ENCODE measurements at regions of chrX and their contacts with region 1.

Region 1: DNA sequence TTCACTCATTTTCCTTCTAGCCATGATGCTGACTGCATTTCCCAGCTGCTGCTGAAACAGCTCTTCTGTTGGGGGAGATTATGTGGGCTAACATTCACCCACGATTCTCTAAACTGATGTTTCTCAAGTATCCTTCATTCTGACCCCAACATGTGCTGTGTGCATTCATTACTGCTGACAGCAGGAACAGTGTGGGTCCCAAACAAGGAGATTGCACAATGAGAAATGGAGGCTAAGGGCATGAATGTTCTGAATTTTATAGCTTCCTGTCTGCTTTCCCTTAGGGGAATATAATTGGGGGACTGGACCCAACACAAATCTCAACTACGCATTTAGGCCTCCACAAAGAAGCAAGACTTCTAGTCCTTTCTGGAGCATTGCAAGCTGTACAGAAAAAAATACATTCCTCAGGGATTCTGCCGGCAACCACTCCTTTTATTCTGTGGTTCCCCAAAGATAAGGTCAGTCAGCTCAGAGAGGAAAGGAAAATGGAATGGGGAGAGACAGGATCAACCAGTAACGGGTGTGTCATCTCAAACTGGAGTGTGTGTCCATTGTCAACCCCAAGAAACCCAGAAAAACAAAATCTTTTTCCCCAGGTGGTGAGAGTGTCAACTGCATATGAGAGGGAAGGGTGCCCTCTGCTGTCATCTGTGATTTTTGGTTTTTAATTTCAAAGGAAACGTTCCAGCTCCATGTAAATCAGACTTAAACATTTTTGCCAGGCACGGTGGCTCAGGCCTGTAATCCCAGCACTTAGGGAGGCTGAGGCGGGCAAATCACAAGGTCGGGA is 81.5 kb upstream of the EGFL6 start:
- DNase-seq: peak; percentile 72
- ATAC-seq: peak; percentile 86
- H3K4me3 ChIP-seq: no peak overlapping the region
- H3K27ac ChIP-seq: peak overlapping the region; percentile 95
- H3K4me1 ChIP-seq: peaks cover 16% of the 10 kb centered on the region
- H3K27me3 ChIP-seq: no peaks in the 10 kb centered on the region
- CTCF ChIP-seq: peak; percentile 56 to 80 (median 62)
- EP300 ChIP-seq: no peak
- POLR2A ChIP-seq: no peak
- RAD21 ChIP-seq: peak; percentile 98

Region 2: DNA sequence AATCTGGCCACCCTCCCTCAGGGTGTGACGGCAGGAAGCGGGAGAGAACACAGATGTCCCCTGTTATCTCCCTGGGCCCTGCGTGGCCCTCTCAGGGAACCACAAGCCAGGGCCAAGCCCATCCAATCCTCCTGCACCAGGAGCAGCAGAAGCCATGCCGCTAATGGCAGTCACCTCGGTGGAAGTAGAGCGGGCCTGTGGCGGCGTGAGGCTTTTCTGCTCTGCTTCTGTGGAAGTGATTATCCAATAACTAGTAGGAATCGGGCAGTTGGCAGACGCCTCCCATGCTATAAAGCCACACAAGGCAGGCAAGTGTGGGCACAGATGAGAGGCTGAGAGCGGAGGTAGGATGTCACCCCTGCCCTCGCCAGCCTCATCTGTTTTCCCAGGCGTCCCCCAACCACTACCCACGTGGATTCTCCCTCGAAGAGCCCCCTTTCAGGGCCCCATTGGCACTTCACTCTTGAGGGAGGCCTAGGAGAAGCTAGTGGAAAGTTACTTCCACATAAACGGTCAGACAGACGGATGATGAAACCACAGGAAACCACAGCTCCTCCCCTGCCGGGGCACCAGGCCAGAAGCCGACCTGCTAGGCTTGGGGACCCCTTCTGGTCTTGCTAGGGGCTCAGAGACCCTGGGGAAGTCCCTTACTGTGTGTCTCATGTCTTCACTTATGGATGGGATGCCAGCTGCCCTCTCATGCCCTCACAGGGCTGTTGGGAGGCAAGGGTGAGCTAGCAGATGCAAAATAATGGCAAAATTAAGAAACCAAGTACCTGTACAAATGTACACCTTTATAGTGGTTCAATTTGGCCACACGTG is 531.8 kb before region 1 on chrX:
- CTCF ChIA-PET with region 1: interaction called, 240 read pairs
- POLR2A ChIA-PET with region 1: interaction called, 7 read pairs
- RAD21 ChIA-PET with region 1: interaction called, 183 read pairs
- SMC1A ChIA-PET with region 1: interaction called, 200 read pairs
- in situ Hi-C with region 1: no loop called
- intact Hi-C with region 1: no loop called
- DNase-seq: peak; percentile 77
- ATAC-seq: peak; percentile 59
- H3K4me3 ChIP-seq: peak overlapping the region; percentile 32
- H3K27ac ChIP-seq: peak overlapping the region; percentile 99
- H3K4me1 ChIP-seq: peaks cover 42% of the 10 kb centered on the region
- H3K27me3 ChIP-seq: no peaks in the 10 kb centered on the region
- CTCF ChIP-seq: no peak
- EP300 ChIP-seq: peak; percentile 48 to 62; a peak in 2 of 4 replicates
- POLR2A ChIP-seq: peak; percentile 30
- RAD21 ChIP-seq: no peak

Region 3: DNA sequence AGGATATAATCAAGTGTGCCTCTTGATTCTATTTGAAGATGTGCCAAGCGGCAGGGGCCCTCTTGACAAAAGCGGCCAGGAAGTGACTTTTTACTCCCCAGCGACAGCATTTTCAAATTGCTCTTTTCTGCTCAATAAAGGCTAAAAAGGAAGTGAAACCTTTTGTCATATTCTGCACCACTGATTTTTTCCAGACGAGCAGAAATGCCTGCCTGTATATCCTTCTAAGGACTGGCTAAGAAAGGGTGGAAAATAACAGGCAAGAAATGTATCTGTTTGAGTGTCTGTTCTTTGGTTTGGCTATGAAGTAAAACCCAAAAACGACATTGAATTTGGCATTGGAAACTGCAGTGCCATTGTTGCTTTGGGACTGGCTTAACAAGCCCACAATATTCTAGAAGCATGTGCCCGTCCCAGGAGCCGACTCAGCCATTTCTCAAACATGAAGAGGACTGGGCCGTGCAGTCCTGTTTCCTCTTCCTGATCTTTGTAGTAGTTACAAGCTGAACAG is 487.6 kb before region 1 on chrX:
- CTCF ChIA-PET with region 1: interaction called, 5 read pairs
- POLR2A ChIA-PET with region 1: no interaction called
- RAD21 ChIA-PET with region 1: interaction called, 8 read pairs
- SMC1A ChIA-PET with region 1: interaction called, 8 read pairs
- in situ Hi-C with region 1: no loop called
- intact Hi-C with region 1: loop called (anchors 5 kb)
- DNase-seq: peak; percentile 90
- ATAC-seq: peak; percentile 52
- H3K4me3 ChIP-seq: peak overlapping the region; percentile 9; the same call in 1 of the 2 replicates
- H3K27ac ChIP-seq: peak overlapping the region; percentile 91
- H3K4me1 ChIP-seq: peaks cover 69% of the 10 kb centered on the region
- H3K27me3 ChIP-seq: no peaks in the 10 kb centered on the region
- CTCF ChIP-seq: no peak
- EP300 ChIP-seq: peak; percentile 73; a peak in 2 of 4 replicates
- POLR2A ChIP-seq: no peak
- RAD21 ChIP-seq: peak; percentile 10; the same call in 1 of the 2 replicates

Region 4: DNA sequence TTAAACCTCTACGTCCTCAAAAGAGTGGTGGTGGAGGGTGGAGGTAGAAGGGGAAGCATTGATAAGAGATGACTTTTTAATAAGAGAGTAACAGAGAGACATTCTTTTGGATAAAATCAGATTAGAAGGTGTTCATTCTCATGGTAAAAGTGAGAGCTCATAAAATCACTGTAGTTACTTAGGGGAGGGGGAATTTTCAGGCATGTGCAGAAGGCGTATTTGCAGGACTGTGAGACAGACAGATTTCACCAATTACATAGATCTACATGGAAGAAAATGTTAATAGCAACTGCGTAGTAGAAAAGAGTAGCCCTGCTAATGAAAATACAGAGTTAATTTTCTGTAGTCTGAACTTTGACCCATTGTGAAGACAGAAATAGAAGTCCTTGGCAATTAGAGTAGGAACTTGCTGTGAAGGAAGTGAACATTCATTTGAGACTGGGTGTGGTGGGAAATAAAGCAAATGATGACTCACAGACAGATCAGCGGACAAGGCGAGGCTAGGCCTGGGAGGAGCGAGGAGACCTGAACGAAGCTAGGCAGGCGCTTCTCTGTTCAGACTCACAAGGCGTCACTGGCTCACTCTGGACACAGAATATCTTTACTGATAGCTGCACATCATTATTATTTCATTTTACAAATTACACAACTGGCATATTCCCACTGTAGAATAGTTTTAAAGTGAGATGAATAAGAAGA is 386.3 kb before region 1 on chrX:
- CTCF ChIA-PET with region 1: interaction called, 15 read pairs
- POLR2A ChIA-PET with region 1: no interaction called
- RAD21 ChIA-PET with region 1: interaction called, 145 read pairs
- SMC1A ChIA-PET with region 1: interaction called, 127 read pairs
- in situ Hi-C with region 1: no loop called
- intact Hi-C with region 1: no loop called
- DNase-seq: no peak
- ATAC-seq: peak; percentile 57
- H3K4me3 ChIP-seq: no peak overlapping the region
- H3K27ac ChIP-seq: no peak overlapping the region
- H3K4me1 ChIP-seq: no peaks in the 10 kb centered on the region
- H3K27me3 ChIP-seq: no peaks in the 10 kb centered on the region
- CTCF ChIP-seq: no peak
- EP300 ChIP-seq: no peak
- POLR2A ChIP-seq: no peak
- RAD21 ChIP-seq: no peak

Region 5: GRCh38 chrX:13283950-13284914 is 203.7 kb before region 1 on chrX:
- CTCF ChIA-PET with region 1: interaction called, 8 read pairs
- POLR2A ChIA-PET with region 1: no interaction called
- RAD21 ChIA-PET with region 1: interaction called, 4 read pairs
- SMC1A ChIA-PET with region 1: interaction called, 11 read pairs
- in situ Hi-C with region 1: no loop called
- intact Hi-C with region 1: no loop called
- DNase-seq: no peak
- ATAC-seq: no peak
- H3K4me3 ChIP-seq: no peak overlapping the region
- H3K27ac ChIP-seq: no peak overlapping the region
- H3K4me1 ChIP-seq: no peaks in the 10 kb centered on the region
- H3K27me3 ChIP-seq: no peaks in the 10 kb centered on the region
- CTCF ChIP-seq: no peak
- EP300 ChIP-seq: no peak
- POLR2A ChIP-seq: no peak
- RAD21 ChIP-seq: no peak

Region 6: GRCh38 chrX:13473442-13474163 is 14.3 kb before region 1 on chrX:
- CTCF ChIA-PET with region 1: interaction called, 47 read pairs
- POLR2A ChIA-PET with region 1: interaction called, 15 read pairs
- RAD21 ChIA-PET with region 1: interaction called, 31 read pairs
- SMC1A ChIA-PET with region 1: interaction called, 89 read pairs
- in situ Hi-C with region 1: no loop called
- intact Hi-C with region 1: no loop called
- DNase-seq: peak; percentile 52
- ATAC-seq: peak; percentile 92
- H3K4me3 ChIP-seq: peak overlapping the region; percentile 52; the same call in 1 of the 2 replicates
- H3K27ac ChIP-seq: peak overlapping the region; percentile 88
- H3K4me1 ChIP-seq: no peaks in the 10 kb centered on the region
- H3K27me3 ChIP-seq: no peaks in the 10 kb centered on the region
- CTCF ChIP-seq: no peak
- EP300 ChIP-seq: peak; percentile 51 to 81; a peak in 3 of 4 replicates
- POLR2A ChIP-seq: no peak
- RAD21 ChIP-seq: no peak

Measured in GM12878 (cell line).